Heart right ventricle (tissue), 16 donors: ENCODE measurements at regions of chr3 and their contacts with region 1.

Region 1: GRCh38 chr3:134697830-134698689 is 47.2 kb upstream of the KY start:
- DNase-seq: no peak
- ATAC-seq: peak; percentile 39 to 81 (median 66)
- H3K4me3 ChIP-seq: no peak overlapping the region
- H3K27ac ChIP-seq: peak overlapping the region in 8 of 10 donors; percentile 25 to 75 (median 57)
- H3K4me1 ChIP-seq: peaks cover 0 to 67% (median 21%) of the 10 kb centered on the region in 9 donors
- H3K27me3 ChIP-seq: no peaks in the 10 kb centered on the region
- CTCF ChIP-seq: peak in 3 of 9 donors; percentile 10 to 21 (median 16)

Region 2: GRCh38 chr3:134640872-134641470 is 57.1 kb before region 1 on chr3:
- intact Hi-C with region 1: loop called in 1 of 10 experiments (anchors 5 kb)
- DNase-seq: no peak
- ATAC-seq: no peak
- H3K4me3 ChIP-seq: no peak overlapping the region
- H3K27ac ChIP-seq: peak overlapping the region in 2 of 10 donors; percentile 16 to 22
- H3K4me1 ChIP-seq: peaks cover 0 to 45% (median 25%) of the 10 kb centered on the region in 9 donors
- H3K27me3 ChIP-seq: no peaks in the 10 kb centered on the region
- CTCF ChIP-seq: peak in 7 of 9 donors; percentile 29 to 51 (median 44)

Region 3: GRCh38 chr3:134650431-134651346 is 47.4 kb before region 1 on chr3 and contains the start of gene KY:
- intact Hi-C with region 1: loop called in 2 of 10 experiments (anchors 5 kb)
- DNase-seq: peak; percentile 48 to 71
- ATAC-seq: peak; percentile 85 to 95 (median 93)
- H3K4me3 ChIP-seq: peak within 1 kb of the TSS; percentile 40 to 64 (median 58)
- H3K27ac ChIP-seq: peak within 1 kb of the TSS; percentile 75 to 94 (median 88)
- H3K4me1 ChIP-seq: peaks cover 2 to 40% (median 15%) of the 10 kb centered on the region in 9 donors
- H3K27me3 ChIP-seq: peaks cover 0 to 24% (median 5%) of the 10 kb centered on the region in 7 donors
- CTCF ChIP-seq: peak in 6 of 9 donors; percentile 17 to 54 (median 42)
- total RNA-seq, gene KY: 3.8 to 24.3 (median 10.5) TPM